Activated naive CD4-positive, alpha-beta T cell treated with anti-CD3 and anti-CD28 coated beads, Interleukin-2, amount 10 ng/mL, durations not matched to agents 7 days and 5 days (primary cell): ENCODE measurements at regions of chr2 and their contacts with region 1.

Region 1: GRCh38 chr2:64727013-64727767 is 73.5 kb upstream of the SERTAD2 start:
- DNase-seq: no peak
- H3K4me3 Mint-ChIP-seq: peak overlapping the region; percentile 11
- H3K27ac Mint-ChIP-seq: peak overlapping the region; percentile 83
- H3K4me1 Mint-ChIP-seq: peaks cover 52% of the 10 kb centered on the region
- H3K27me3 Mint-ChIP-seq: no peaks in the 10 kb centered on the region

Region 2: GRCh38 chr2:64737547-64737946 is 10.4 kb after region 1 on chr2:
- CTCF ChIA-PET with region 1: interaction called, 10 read pairs
- DNase-seq: no peak
- H3K4me3 Mint-ChIP-seq: no peak overlapping the region
- H3K27ac Mint-ChIP-seq: peak overlapping the region; percentile 33
- H3K4me1 Mint-ChIP-seq: peaks cover 29% of the 10 kb centered on the region
- H3K27me3 Mint-ChIP-seq: no peaks in the 10 kb centered on the region

Region 3: DNA sequence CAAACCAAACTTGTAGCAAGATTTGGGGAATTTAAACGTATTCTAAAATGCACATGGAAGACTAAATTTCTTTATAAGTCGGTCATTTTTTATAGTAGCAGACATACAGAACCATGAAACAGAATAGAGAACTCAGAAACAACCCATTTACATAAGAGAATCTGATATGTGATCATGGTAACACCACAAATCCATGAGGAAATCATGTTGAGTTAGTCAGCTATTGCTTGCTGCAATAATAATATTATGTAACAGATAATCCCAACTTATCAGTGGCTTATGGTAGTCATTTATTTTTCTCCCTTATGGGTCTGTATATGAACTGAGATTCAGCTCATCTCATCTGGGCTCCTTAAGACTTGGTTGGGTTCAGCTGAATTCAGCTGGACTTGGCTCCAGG is 29.9 kb after region 1 on chr2:
- CTCF ChIA-PET with region 1: no interaction called
- DNase-seq: no peak
- H3K4me3 Mint-ChIP-seq: no peak overlapping the region
- H3K27ac Mint-ChIP-seq: no peak overlapping the region
- H3K4me1 Mint-ChIP-seq: peaks cover 8% of the 10 kb centered on the region
- H3K27me3 Mint-ChIP-seq: no peaks in the 10 kb centered on the region